ENCODE measurements at regions of chr9 and their contacts with region 1.

Region 1: GRCh38 chr9:14314929-14315645 is 1.1 kb upstream of the NFIB start:
- DNase-seq: peak; percentile 85
- ATAC-seq: peak; percentile 49
- H3K4me3 ChIP-seq: peak overlapping the region; percentile 75
- H3K27ac ChIP-seq: peak overlapping the region; percentile 93
- H3K4me1 ChIP-seq: peaks cover 35% of the 10 kb centered on the region
- H3K27me3 ChIP-seq: no peaks in the 10 kb centered on the region
- CTCF ChIP-seq: no peak

Region 2: DNA sequence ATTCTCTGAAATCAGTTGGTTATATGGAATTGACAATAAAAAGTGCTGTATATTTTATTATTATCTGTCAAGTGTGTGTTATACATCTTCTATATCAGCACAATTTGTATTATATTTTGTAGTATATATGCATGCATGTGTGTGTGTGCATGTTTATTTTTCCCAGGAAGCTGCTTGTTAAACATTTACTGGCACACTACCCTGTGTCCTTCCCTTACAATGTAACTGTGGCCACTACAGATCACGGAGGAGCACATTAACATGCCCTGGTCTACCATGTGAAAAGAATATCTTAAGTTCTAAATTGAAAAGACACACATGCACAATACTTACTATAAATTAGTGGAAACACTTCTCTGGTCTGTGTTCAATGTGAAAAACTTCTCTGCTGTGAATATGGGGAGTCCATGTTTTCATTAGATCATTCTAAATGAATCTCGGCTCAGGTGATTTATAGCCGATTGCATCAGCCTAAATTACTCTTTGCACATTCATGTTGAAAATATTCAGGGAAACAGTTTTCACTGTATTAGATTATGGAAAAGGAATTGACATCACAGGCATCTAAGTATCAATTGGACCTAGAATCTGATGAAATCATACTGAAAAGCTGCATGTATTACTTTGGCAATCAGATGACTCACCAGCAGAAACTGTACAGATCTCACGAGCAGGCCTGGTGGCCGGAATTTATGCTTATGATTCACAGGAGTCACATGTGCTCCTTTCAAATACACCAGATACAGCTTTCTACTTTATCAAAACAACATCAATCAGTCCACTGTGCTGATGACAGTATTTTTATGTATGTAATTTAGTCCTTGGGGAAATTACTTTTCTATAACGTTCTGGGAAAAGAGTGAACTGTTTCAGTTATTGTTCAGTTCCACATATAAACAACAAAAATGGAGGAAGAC is 1500.9 kb before region 1 on chr9:
- CTCF ChIA-PET with region 1: no interaction called
- POLR2A ChIA-PET with region 1: interaction called, 11 read pairs
- intact Hi-C with region 1: no loop called
- DNase-seq: peak; percentile 93
- ATAC-seq: peak; percentile 62
- H3K4me3 ChIP-seq: peak overlapping the region; percentile 35
- H3K27ac ChIP-seq: peak overlapping the region; percentile 100
- H3K4me1 ChIP-seq: peaks cover 65% of the 10 kb centered on the region
- H3K27me3 ChIP-seq: no peaks in the 10 kb centered on the region
- CTCF ChIP-seq: no peak

Region 3: GRCh38 chr9:14030375-14031059 is 284.6 kb before region 1 on chr9:
- CTCF ChIA-PET with region 1: no interaction called
- POLR2A ChIA-PET with region 1: no interaction called
- intact Hi-C with region 1: loop called (anchors 10 kb)
- DNase-seq: peak; percentile 83
- ATAC-seq: peak; percentile 85
- H3K4me3 ChIP-seq: peak overlapping the region; percentile 46; the same call in 1 of the 2 replicates
- H3K27ac ChIP-seq: peak overlapping the region; percentile 47
- H3K4me1 ChIP-seq: peaks cover 27% of the 10 kb centered on the region
- H3K27me3 ChIP-seq: no peaks in the 10 kb centered on the region
- CTCF ChIP-seq: no peak

Region 4: DNA sequence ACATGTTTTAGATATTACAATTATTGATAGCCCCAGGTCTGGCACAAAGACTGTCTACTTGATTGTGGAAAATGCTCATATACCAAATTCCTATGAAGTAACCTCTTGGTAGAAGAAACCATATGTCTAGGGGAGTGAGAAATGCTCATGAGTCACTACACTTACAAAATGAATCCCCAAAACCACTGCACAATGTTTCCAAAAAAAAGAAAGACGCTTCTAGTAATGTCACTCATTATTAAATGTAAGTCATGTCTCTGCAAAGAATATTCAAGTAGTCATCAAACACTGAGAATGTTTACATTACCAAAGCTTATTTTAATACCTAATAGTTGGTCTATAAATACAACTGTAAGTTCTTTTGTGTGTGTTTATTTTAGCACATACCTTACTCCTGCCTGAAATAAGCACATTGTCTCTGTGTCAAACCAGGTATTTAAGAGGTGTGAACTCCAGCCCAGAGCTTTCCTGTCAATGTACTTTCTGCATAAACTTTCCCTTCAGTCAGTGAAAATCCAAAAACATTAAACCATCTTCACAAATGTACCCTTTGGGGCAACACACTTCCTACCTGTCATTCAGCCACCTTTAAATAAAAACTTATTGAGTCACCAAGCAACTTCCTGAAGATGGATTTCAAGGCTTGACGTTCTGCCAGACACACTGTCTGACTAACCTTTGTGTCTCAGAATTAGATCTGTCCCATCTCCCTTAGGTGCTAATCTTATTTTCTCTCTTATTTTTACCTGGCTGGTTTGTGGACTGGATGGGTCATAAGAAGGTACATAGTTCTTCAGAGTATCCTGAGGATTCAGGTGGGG is 195.2 kb before region 1 on chr9:
- CTCF ChIA-PET with region 1: no interaction called
- POLR2A ChIA-PET with region 1: interaction called, 8 read pairs
- intact Hi-C with region 1: loop called (anchors 5 kb)
- DNase-seq: peak; percentile 85
- ATAC-seq: peak; percentile 86
- H3K4me3 ChIP-seq: no peak overlapping the region
- H3K27ac ChIP-seq: peak overlapping the region; percentile 81
- H3K4me1 ChIP-seq: peaks cover 21% of the 10 kb centered on the region
- H3K27me3 ChIP-seq: no peaks in the 10 kb centered on the region
- CTCF ChIP-seq: no peak

Region 5: DNA sequence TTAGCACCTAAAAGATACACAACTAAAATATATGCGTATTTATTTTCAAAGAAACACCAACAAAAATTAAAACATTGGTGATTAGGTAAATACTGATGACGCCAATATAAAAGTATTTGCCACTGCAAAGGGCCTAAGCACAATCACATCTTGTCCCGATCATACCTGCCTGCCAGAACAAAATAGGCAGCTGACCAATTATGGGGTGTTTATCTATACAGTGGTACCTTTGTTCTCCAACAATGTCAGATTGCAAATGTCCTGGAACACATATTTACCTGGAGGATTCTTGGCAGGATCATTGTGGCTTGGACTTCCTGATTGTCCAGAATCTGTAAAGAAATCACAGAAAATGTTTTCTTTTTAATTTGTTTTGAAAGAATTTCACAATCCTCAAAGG is 135.6 kb before region 1 on chr9:
- CTCF ChIA-PET with region 1: no interaction called
- POLR2A ChIA-PET with region 1: no interaction called
- intact Hi-C with region 1: loop called (anchors 5 kb)
- DNase-seq: peak; percentile 84
- ATAC-seq: peak; percentile 91
- H3K4me3 ChIP-seq: peak overlapping the region; percentile 22; the same call in 1 of the 2 replicates
- H3K27ac ChIP-seq: peak overlapping the region; percentile 66
- H3K4me1 ChIP-seq: peaks cover 37% of the 10 kb centered on the region
- H3K27me3 ChIP-seq: no peaks in the 10 kb centered on the region
- CTCF ChIP-seq: no peak

Region 6: DNA sequence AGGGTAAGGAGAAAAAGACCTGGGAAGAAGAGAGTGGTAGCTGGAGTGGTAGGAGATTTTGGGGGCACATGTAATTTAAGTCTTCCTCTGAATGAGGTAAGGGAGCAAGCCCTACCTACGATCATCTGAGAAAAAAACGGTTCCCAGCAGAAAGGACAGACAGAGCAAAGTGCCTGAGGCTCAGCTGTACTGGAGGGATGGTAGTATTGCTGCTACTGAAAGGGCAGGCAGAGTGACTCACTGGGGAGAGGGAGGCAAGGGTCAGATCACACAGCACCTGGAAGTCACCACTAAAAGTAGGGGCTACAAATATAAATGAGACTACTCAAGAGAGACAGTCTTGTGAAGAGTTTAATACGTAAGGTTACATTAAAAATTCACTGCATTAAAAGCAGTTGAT is 77.0 kb before region 1 on chr9:
- CTCF ChIA-PET with region 1: no interaction called
- POLR2A ChIA-PET with region 1: no interaction called
- intact Hi-C with region 1: no loop called
- DNase-seq: peak; percentile 68
- ATAC-seq: peak; percentile 79
- H3K4me3 ChIP-seq: peak overlapping the region; percentile 40; the same call in 1 of the 2 replicates
- H3K27ac ChIP-seq: peak overlapping the region; percentile 87
- H3K4me1 ChIP-seq: peaks cover 31% of the 10 kb centered on the region
- H3K27me3 ChIP-seq: no peaks in the 10 kb centered on the region
- CTCF ChIP-seq: no peak

Region 7: GRCh38 chr9:14251154-14252071 is 63.7 kb before region 1 on chr9:
- CTCF ChIA-PET with region 1: no interaction called
- POLR2A ChIA-PET with region 1: no interaction called
- intact Hi-C with region 1: loop called (anchors 2 kb)
- DNase-seq: peak; percentile 92
- ATAC-seq: peak; percentile 75
- H3K4me3 ChIP-seq: peak overlapping the region; percentile 62
- H3K27ac ChIP-seq: peak overlapping the region; percentile 91
- H3K4me1 ChIP-seq: peaks cover 40% of the 10 kb centered on the region
- H3K27me3 ChIP-seq: no peaks in the 10 kb centered on the region
- CTCF ChIP-seq: no peak